CD4-positive, alpha-beta memory T cell (primary cell): ENCODE measurements at regions of chr9 and their contacts with region 1.

Region 1: GRCh38 chr9:136885950-136886578 is at the start of gene TRAF2:
- DNase-seq: peak; percentile 97
- H3K4me3 ChIP-seq: peak within 1 kb of the TSS; percentile 36 to 82
- H3K4me3 Mint-ChIP-seq: peak within 1 kb of the TSS; percentile 84 to 92 (median 88)
- H3K27ac ChIP-seq: peak within 1 kb of the TSS; percentile 98
- H3K27ac Mint-ChIP-seq: peak within 1 kb of the TSS; percentile 92 to 97 (median 94)
- H3K4me1 ChIP-seq: peaks cover 54% of the 10 kb centered on the region
- H3K4me1 Mint-ChIP-seq: peaks cover 16 to 57% (median 32%) of the 10 kb centered on the region in 4 donors
- H3K27me3 ChIP-seq: no peaks in the 10 kb centered on the region
- H3K27me3 Mint-ChIP-seq: no peaks in the 10 kb centered on the region
- total RNA-seq, gene TRAF2: 40.2 to 43.2 TPM

Region 2: GRCh38 chr9:136807281-136808074 is 78.6 kb before region 1 on chr9 and contains the start of gene RABL6:
- CTCF ChIA-PET with region 1: no interaction called
- POLR2A ChIA-PET with region 1: interaction called, 21 read pairs
- intact Hi-C with region 1: no loop called
- DNase-seq: peak; percentile 78 to 90 (median 86)
- H3K4me3 ChIP-seq: peak within 1 kb of the TSS; percentile 61 to 74
- H3K4me3 Mint-ChIP-seq: peak within 1 kb of the TSS; percentile 87 to 93 (median 90)
- H3K27ac ChIP-seq: peak within 1 kb of the TSS; percentile 83
- H3K27ac Mint-ChIP-seq: peak within 1 kb of the TSS; percentile 91 to 96 (median 94)
- H3K4me1 ChIP-seq: peaks cover 40% of the 10 kb centered on the region
- H3K4me1 Mint-ChIP-seq: peaks cover 11 to 45% (median 30%) of the 10 kb centered on the region in 4 donors
- H3K27me3 ChIP-seq: no peaks in the 10 kb centered on the region
- H3K27me3 Mint-ChIP-seq: no peaks in the 10 kb centered on the region
- total RNA-seq, gene RABL6: 65.1 to 70.9 TPM

Region 3: DNA sequence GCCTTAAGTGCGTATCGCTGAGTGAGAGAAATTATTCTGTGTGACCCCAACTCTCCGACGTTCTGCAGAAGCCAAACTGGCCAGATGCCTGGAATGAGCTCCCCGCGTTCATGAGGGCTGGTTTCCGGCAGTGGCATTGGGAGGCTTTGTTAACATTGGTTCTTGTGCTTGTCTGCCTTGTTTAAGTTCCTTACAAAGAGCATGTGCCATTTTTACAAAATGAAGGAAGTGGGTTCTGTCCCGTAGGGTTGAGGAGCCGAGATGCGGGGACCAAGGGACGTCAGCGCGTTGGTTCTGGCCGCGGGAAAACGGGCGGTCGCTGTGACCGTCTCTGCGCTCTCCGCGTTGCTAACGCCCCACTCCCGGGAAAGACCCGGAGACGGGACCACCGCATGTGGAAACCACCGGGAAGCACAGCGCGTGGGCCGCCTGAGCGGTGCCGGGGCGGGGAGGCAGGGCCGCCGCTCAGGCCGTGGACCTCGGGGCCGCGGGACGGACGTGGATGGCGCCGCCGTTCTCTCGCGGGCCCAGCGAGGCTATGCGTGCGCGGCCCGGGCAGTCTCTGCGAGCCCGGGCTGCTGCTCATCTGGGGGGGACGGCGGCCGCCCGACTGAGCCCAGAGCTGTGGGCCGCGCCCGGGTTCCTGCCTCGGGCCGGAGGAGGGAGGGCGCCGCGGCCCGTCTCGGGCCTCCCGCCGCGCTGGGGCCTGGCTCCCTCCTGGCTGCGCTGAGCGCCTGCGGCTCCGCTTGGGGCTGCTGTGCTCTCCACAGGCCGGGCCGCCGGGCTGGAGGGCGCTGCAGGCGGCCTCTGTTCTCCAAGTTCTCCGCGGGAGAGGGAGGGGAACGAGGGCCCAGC is 64.9 kb before region 1 on chr9:
- CTCF ChIA-PET with region 1: no interaction called
- POLR2A ChIA-PET with region 1: no interaction called
- intact Hi-C with region 1: no loop called
- DNase-seq: no peak
- H3K4me3 ChIP-seq: no peak overlapping the region
- H3K4me3 Mint-ChIP-seq: no peak overlapping the region
- H3K27ac ChIP-seq: no peak overlapping the region
- H3K27ac Mint-ChIP-seq: no peak overlapping the region
- H3K4me1 ChIP-seq: no peaks in the 10 kb centered on the region
- H3K4me1 Mint-ChIP-seq: peaks cover 3 to 12% (median 6%) of the 10 kb centered on the region in 4 donors
- H3K27me3 ChIP-seq: no peaks in the 10 kb centered on the region
- H3K27me3 Mint-ChIP-seq: no peaks in the 10 kb centered on the region

Region 4: DNA sequence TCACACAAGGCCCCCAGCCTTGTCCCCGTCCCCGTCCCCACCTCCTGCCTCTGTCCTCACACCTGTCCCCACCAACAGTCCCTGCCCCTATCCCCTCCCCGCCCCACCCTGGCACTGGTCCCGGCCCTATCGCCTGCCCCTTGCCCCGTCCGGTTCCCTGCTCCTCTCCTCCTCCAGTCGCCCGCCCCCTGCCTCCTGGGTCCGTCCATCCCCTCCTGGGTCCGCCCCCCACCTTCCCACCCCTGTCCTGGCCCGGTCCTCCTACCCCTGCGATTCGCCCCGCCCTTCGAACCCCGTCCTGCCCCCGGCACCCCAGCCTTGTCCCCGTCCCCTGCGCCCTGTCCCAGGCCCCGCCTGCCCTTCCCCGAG is 20.3 kb before region 1 on chr9:
- CTCF ChIA-PET with region 1: interaction called, 3 read pairs
- POLR2A ChIA-PET with region 1: interaction called, 8 read pairs
- intact Hi-C with region 1: loop called (anchors 1 kb)
- DNase-seq: peak in 1 of 5 donors; percentile 50
- H3K4me3 ChIP-seq: peak overlapping the region; percentile 40 to 75
- H3K4me3 Mint-ChIP-seq: peak overlapping the region; percentile 75 to 93 (median 85)
- H3K27ac ChIP-seq: peak overlapping the region; percentile 87
- H3K27ac Mint-ChIP-seq: peak overlapping the region; percentile 75 to 94 (median 85)
- H3K4me1 ChIP-seq: peaks cover 18% of the 10 kb centered on the region
- H3K4me1 Mint-ChIP-seq: peaks cover 4 to 23% (median 11%) of the 10 kb centered on the region in 4 donors
- H3K27me3 ChIP-seq: no peaks in the 10 kb centered on the region
- H3K27me3 Mint-ChIP-seq: no peaks in the 10 kb centered on the region

Region 5: GRCh38 chr9:136902259-136902821 is 16.3 kb after region 1 on chr9:
- CTCF ChIA-PET with region 1: interaction called, 5 read pairs
- POLR2A ChIA-PET with region 1: interaction called, 39 read pairs
- intact Hi-C with region 1: loop called (anchors 1 kb)
- DNase-seq: peak; percentile 78 to 98 (median 84)
- H3K4me3 ChIP-seq: peak overlapping the region; percentile 13 to 53
- H3K4me3 Mint-ChIP-seq: peak overlapping the region; percentile 81 to 90 (median 84)
- H3K27ac ChIP-seq: peak overlapping the region; percentile 96
- H3K27ac Mint-ChIP-seq: peak overlapping the region; percentile 98 to 100 (median 99)
- H3K4me1 ChIP-seq: peaks cover 41% of the 10 kb centered on the region
- H3K4me1 Mint-ChIP-seq: peaks cover 27 to 57% (median 38%) of the 10 kb centered on the region in 4 donors
- H3K27me3 ChIP-seq: no peaks in the 10 kb centered on the region
- H3K27me3 Mint-ChIP-seq: no peaks in the 10 kb centered on the region